Sigmoid colon (tissue), 7 donors: ENCODE measurements at regions of chr1 and their contacts with region 1.

Region 1: GRCh38 chr1:171226747-171227370 is 21.4 kb upstream of the FMO1 start:
- DNase-seq: no peak
- H3K4me3 ChIP-seq: no peak overlapping the region
- H3K27ac ChIP-seq: no peak overlapping the region
- H3K4me1 ChIP-seq: peaks cover 0 to 8% (median 0%) of the 10 kb centered on the region in 4 donors
- H3K27me3 ChIP-seq: no peaks in the 10 kb centered on the region
- CTCF ChIP-seq: peak; percentile 24 to 56 (median 38)
- EP300 ChIP-seq: no peak
- POLR2A ChIP-seq: no peak

Region 2: GRCh38 chr1:170881268-170882265 is 345.3 kb before region 1 on chr1:
- intact Hi-C with region 1: no loop called
- DNase-seq: no peak
- H3K4me3 ChIP-seq: no peak overlapping the region
- H3K27ac ChIP-seq: no peak overlapping the region
- H3K4me1 ChIP-seq: no peaks in the 10 kb centered on the region
- H3K27me3 ChIP-seq: no peaks in the 10 kb centered on the region
- CTCF ChIP-seq: peak in 1 of 4 experiments; percentile 14
- EP300 ChIP-seq: no peak
- POLR2A ChIP-seq: no peak

Region 3: DNA sequence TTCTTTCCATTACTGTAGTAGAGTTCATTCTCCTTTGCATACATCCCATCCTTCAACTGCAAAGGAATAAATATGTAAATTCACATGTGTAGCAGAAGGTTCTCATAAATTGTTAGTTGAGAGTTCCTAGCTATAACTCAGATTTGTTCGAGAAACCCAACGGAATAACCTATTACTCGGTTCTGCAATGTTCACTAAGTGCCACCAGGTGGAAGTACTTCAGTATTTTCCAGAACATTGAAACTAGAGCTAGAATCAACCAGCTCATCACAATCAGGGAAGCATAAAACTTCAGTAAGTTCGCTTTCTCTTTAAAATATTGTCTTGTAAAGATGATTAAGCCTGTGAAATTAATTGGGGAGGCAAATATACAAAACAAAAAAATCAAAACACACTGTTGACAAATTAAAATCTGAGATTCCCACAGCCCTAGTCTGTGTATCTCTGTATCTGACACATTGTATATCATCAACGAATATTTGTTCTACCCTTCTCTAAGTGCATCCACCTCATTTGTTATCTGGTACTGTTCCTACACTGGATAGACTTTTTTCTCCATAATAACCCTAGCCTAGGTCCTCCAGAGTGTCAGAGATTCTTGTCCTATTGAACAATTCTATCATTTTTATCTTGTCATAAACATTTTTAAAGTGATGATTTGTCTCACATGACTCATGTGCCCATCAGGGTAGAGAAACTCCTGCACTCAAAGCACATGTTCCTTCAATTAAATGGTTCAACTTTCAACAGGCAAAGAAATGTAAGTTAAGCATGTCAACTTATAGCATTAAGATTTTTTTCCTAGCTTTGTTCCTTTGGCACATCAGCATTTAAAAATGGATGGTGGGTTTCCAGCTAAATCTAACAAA is 259.6 kb before region 1 on chr1:
- intact Hi-C with region 1: loop called (anchors 2 kb)
- DNase-seq: no peak
- H3K4me3 ChIP-seq: no peak overlapping the region
- H3K27ac ChIP-seq: no peak overlapping the region
- H3K4me1 ChIP-seq: peaks cover 0 to 5% (median 0%) of the 10 kb centered on the region in 4 donors
- H3K27me3 ChIP-seq: no peaks in the 10 kb centered on the region
- CTCF ChIP-seq: peak in 3 of 4 experiments; percentile 36 to 56 (median 50)
- EP300 ChIP-seq: no peak
- POLR2A ChIP-seq: no peak

Region 4: GRCh38 chr1:171081314-171081753 is 145.5 kb before region 1 on chr1:
- intact Hi-C with region 1: loop called (anchors 5 kb)
- DNase-seq: no peak
- H3K4me3 ChIP-seq: no peak overlapping the region
- H3K27ac ChIP-seq: peak overlapping the region in 1 of 4 donors; percentile 67
- H3K4me1 ChIP-seq: peaks cover 0 to 7% (median 3%) of the 10 kb centered on the region in 4 donors
- H3K27me3 ChIP-seq: no peaks in the 10 kb centered on the region
- CTCF ChIP-seq: peak in 2 of 4 experiments; percentile 13 to 18
- EP300 ChIP-seq: no peak
- POLR2A ChIP-seq: no peak